Dendritic cell treated with granulocyte-macrophage colony-stimulating factor and Interleukin-4, amounts not matched to agents 40 ng/mL and 50 ng/mL, for 4 days (primary cell): ENCODE measurements at regions of chr16 and their contacts with region 1.

Region 1: GRCh38 chr16:75572864-75573542 is 6.8 kb downstream of the GABARAPL2 start:
- H3K4me3 Mint-ChIP-seq: no peak overlapping the region
- H3K27ac Mint-ChIP-seq: no peak overlapping the region
- H3K4me1 Mint-ChIP-seq: peaks cover 47% of the 10 kb centered on the region
- H3K27me3 Mint-ChIP-seq: no peaks in the 10 kb centered on the region

Region 2: DNA sequence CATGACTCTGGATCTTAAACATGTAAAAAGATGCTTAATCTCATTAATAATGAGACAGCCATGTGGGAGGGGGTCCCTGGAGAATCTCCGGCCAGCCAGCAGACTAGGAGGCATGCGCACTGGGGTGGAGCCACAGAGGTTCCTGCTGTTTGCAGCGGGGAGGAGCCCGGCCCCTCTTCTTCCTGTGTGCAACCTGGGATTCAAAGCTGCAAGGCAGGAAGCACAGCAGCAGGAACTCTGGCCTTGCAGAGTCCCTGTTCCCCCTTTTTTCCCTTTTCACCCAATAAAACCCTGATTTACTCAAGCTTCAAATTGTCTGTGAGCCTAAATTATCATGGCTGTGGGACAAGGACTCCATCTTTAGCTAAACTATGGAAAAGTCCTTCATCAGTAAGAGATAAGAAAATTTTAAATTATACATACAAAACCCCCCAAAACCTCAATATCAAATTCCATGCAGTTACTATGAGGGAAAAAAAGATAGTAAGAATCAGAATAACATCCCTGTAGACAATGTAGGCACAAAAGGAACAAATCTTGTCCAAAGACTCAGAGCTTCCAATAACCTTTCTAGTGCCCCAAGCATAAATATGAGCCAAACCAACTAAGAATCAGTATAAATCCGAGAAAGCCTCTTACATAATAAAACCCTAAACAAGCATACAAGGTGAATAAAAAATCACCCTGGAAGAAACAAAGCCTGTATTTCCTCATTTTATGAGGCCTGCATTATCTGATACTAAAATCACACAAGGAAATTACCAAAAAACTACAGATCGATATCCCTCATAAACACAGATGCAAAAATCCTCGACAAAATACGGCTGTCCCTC is 151.8 kb before region 1 on chr16:
- intact Hi-C with region 1: no loop called
- H3K4me3 Mint-ChIP-seq: peak overlapping the region; percentile 68
- H3K27ac Mint-ChIP-seq: peak overlapping the region; percentile 66
- H3K4me1 Mint-ChIP-seq: peaks cover 18% of the 10 kb centered on the region
- H3K27me3 Mint-ChIP-seq: no peaks in the 10 kb centered on the region

Region 3: GRCh38 chr16:75622761-75623605 is 50.0 kb after region 1 on chr16 and contains the start of gene ADAT1:
- intact Hi-C with region 1: loop called (anchors 2 kb)
- H3K4me3 Mint-ChIP-seq: peak within 1 kb of the TSS; percentile 88
- H3K27ac Mint-ChIP-seq: peak within 1 kb of the TSS; percentile 97
- H3K4me1 Mint-ChIP-seq: peaks cover 28% of the 10 kb centered on the region
- H3K27me3 Mint-ChIP-seq: no peaks in the 10 kb centered on the region

Region 4: DNA sequence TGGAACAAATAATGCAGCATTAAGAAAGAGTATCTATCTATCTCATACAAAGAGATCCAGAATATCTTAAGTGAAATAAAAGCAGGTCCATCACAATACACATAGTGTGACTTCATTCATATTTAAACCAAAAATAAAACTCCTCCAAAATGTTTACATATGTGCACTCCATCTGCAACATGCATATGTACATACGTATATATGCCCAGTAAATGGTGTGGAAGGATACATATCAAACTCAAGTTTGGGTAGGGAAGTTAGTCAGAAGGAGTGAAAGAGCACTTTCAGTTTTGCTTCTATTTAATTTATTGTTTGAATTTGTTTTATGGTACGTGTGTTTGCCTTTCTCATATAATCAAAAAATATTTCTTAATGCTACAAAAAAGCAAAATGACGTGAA is 62.0 kb after region 1 on chr16:
- intact Hi-C with region 1: no loop called
- H3K4me3 Mint-ChIP-seq: no peak overlapping the region
- H3K27ac Mint-ChIP-seq: no peak overlapping the region
- H3K4me1 Mint-ChIP-seq: no peaks in the 10 kb centered on the region
- H3K27me3 Mint-ChIP-seq: no peaks in the 10 kb centered on the region